Activated CD4-positive, alpha-beta T cell treated with anti-CD3 and anti-CD28 coated beads, Interleukin-2, amount 10 ng/mL, durations not matched to agents 24 days and 14 days (primary cell): ENCODE measurements at regions of chr14 and their contacts with region 1.

Region 1: GRCh38 chr14:45253068-45253753 is at the start of gene MIS18BP1:
- DNase-seq: peak; percentile 98
- H3K4me3 Mint-ChIP-seq: peak within 1 kb of the TSS; percentile 96
- H3K27ac Mint-ChIP-seq: peak within 1 kb of the TSS; percentile 99
- H3K4me1 Mint-ChIP-seq: peaks cover 24% of the 10 kb centered on the region
- H3K27me3 Mint-ChIP-seq: peaks cover 2% of the 10 kb centered on the region
- total RNA-seq, gene MIS18BP1: 58.9 and 67.1 TPM in 2 replicates

Region 2: DNA sequence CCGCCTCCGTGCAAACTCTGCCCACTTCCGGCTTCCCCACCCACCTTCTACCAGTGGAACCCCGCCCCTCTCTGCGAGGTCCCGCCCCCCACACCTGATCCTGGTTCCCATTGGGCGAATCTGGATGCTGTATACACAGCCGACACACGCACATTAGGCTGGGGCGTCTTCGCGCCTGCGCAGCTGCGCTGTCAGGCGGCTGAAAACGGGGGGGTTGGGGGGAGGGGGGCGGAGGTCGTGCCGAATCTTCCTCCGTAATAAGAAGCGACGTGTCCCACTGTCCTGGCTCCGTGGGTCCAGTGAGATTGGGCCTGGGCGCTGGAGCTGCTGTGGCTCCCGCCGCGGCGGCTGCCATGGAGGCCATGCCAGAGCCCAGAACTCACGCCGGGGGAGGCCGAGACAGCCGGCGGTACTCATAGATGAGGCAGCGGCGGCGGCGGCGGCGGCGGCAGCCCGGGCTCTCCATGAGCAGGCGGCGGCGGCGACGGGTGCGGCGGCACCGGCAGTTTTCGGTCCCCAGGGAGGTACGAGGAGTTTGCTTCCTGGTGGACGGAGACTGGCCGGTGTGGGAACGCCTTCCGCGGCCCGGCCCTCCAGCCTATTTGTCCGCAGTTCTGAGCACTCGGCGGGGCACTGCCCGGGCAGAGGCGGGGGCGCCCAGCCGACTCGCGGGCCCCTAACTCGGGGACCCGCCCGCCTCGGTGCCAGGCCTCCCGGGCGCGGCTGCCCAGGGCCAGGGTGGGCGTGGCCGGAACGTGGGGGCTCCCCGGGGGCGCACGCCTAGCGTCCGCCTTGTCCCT is 356.0 kb before region 1 on chr14:
- intact Hi-C with region 1: loop called (anchors 1 kb)
- DNase-seq: peak; percentile 96
- H3K4me3 Mint-ChIP-seq: peak overlapping the region; percentile 86
- H3K27ac Mint-ChIP-seq: peak overlapping the region; percentile 93
- H3K4me1 Mint-ChIP-seq: peaks cover 10% of the 10 kb centered on the region
- H3K27me3 Mint-ChIP-seq: no peaks in the 10 kb centered on the region

Region 3: DNA sequence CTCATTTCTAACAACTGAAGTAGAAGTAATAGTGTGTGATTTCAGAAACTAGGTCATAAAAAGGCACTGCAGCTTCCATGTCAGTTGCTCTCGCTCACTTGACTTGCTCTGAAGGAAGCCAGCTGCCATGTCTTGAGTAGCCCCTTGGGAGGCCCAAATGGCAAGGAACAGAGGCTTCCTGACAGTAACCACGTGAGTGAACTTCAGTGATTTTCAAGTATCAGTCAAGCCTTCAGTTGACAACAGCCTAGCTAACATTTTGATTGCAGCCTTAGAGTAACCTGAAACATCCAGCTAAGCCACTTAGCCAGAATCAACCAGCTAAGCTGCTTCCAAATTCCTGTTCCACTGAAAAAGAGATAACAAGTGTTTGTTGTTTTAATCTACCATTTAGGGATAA is 264.5 kb before region 1 on chr14:
- intact Hi-C with region 1: no loop called
- DNase-seq: no peak
- H3K4me3 Mint-ChIP-seq: no peak overlapping the region
- H3K27ac Mint-ChIP-seq: no peak overlapping the region
- H3K4me1 Mint-ChIP-seq: no peaks in the 10 kb centered on the region
- H3K27me3 Mint-ChIP-seq: no peaks in the 10 kb centered on the region

Region 4: GRCh38 chr14:45083971-45084722 is 169.1 kb before region 1 on chr14 and contains the start of gene PRPF39:
- intact Hi-C with region 1: loop called (anchors 2 kb)
- DNase-seq: peak; percentile 99
- H3K4me3 Mint-ChIP-seq: peak within 1 kb of the TSS; percentile 98
- H3K27ac Mint-ChIP-seq: peak within 1 kb of the TSS; percentile 98
- H3K4me1 Mint-ChIP-seq: peaks cover 35% of the 10 kb centered on the region
- H3K27me3 Mint-ChIP-seq: no peaks in the 10 kb centered on the region
- total RNA-seq, gene PRPF39: 48.1 and 50.5 TPM in 2 replicates

Region 5: DNA sequence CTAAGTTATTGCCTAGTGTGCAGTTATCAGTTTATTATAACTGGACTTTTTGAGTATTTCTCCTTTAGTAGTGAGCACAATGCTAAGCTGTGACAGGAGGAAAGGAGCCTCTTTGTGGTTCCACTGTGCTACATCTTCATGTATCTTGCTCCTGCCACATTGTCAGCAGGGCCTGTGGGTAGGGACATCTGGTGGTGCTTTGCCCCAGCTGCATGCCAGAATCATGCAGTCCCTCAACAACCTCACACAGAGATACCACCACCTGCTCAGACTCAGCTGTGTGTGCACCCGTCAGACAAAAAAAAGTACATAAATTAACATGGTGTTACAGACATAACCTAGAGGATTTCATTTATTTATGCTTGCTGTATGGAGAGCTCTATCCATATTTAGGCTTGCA is 51.3 kb before region 1 on chr14:
- intact Hi-C with region 1: loop called (anchors 10 kb)
- DNase-seq: peak; percentile 72
- H3K4me3 Mint-ChIP-seq: no peak overlapping the region
- H3K27ac Mint-ChIP-seq: peak overlapping the region; percentile 45
- H3K4me1 Mint-ChIP-seq: peaks cover 6% of the 10 kb centered on the region
- H3K27me3 Mint-ChIP-seq: no peaks in the 10 kb centered on the region

Region 6: DNA sequence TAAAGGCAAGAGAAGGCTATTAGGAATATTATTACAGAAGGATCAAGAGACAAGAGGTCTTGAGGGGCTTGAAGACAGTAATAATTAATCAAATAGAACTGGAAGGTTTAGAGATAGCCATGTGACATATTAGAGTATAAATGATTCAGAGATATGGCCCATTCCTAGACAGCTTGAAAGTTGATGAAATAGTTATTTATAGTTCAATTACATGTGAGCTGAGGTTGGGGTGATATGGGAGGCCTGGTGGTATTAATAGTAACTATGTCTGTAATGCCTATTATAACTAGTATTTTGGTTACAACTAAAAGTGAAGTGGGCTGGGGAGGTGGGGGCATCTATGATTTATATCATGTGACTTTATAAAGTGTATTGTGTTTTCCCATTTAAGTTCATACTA is 13.9 kb after region 1 on chr14:
- intact Hi-C with region 1: loop called (anchors 2 kb)
- DNase-seq: no peak
- H3K4me3 Mint-ChIP-seq: no peak overlapping the region
- H3K27ac Mint-ChIP-seq: no peak overlapping the region
- H3K4me1 Mint-ChIP-seq: peaks cover 5% of the 10 kb centered on the region
- H3K27me3 Mint-ChIP-seq: peaks cover 15% of the 10 kb centered on the region